AG04449 (cell line): ENCODE measurements at regions of chr6 and their contacts with region 1.

Region 1: DNA sequence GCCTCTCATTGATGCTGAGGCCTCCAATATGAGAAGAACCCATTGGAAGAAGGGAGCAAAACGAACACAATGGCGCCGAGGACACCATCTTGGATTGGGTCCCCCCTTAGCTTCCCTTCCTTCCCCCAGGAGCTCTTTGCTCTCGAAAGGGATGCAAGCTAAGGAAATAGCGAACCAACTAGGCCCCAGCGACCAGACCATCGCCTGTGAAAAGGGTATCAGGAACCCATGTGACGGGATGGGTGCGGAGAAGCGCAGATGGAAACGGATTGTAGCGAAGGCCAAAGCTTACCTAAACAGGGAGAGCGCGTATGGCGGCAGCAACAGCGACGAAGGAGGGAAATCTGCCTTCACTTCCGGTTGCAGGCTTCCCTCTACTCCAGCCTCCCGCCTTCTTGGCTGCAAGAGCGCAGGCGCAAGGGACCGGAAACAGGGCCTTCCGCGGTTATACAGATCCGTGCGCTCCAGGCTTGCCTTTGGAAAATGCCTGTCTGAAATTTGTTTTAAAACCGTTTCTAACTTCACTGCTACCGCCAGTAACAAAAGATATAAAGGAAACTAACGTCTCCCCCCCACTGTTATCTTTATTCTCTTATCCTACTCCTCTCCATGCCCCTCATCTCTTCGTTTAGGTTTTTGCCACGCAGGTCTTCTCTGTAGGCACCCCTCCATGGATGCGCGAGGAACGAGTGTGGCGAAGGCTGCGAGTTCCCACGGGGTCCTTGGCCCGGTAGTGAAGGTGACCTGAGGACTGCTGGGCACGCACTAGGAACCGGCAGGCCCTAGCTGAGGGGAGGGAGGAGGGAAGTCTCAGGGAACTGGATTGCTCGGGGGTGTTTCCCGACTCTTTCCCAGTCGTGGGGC is at the start of gene DDX39B:
- DNase-seq: peak; percentile 85
- H3K4me3 ChIP-seq: peak within 1 kb of the TSS; percentile 97
- CTCF ChIP-seq: no peak

Region 2: GRCh38 chr6:31493875-31494694 is 47.8 kb before region 1 on chr6:
- CTCF ChIA-PET with region 1: interaction called, 15 read pairs
- POLR2A ChIA-PET with region 1: interaction called, 13 read pairs
- DNase-seq: no peak
- H3K4me3 ChIP-seq: peak overlapping the region; percentile 70
- CTCF ChIP-seq: peak; percentile 86

Region 3: GRCh38 chr6:31529329-31530150 is 12.3 kb before region 1 on chr6:
- CTCF ChIA-PET with region 1: interaction called, 4 read pairs
- POLR2A ChIA-PET with region 1: interaction called, 13 read pairs
- DNase-seq: no peak
- H3K4me3 ChIP-seq: no peak overlapping the region
- CTCF ChIP-seq: no peak

Region 4: GRCh38 chr6:31580807-31581433 is 39.0 kb after region 1 on chr6:
- CTCF ChIA-PET with region 1: interaction called, 1,569 read pairs
- POLR2A ChIA-PET with region 1: interaction called, 5 read pairs
- DNase-seq: no peak
- H3K4me3 ChIP-seq: peak overlapping the region; percentile 89
- CTCF ChIP-seq: peak; percentile 93

Region 5: DNA sequence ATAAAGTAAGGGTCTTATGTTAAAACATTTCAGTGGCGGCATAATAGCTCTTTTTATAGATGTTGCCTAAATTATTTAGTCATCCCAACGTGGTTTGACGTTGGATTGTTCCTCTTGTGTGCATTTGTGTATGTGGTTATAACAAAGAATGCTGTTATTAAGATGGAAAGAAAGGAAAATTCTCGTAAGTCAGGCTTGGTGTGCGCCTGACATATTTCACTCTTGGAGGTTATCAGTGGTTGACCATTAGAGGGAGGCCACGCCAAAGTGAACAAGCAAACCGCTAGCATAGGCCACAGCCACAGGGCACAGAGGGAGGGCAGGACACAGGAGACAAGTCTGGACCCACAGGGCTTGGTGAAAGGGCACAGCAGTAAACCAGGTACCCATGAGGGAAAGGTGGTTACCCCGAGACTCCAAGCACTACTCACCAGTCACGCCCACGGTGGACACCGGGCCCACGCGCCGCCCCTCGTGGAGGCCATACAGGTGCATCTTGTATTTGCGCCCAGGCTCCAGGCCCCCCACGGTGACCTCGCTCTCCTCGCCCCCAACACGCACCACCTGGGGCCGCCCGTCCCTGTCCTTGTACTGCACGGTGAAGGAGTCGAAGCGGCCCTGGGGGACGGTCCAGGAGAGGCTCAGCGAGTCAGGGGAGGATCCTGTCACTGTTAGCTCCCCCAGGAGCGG is 519.2 kb after region 1 on chr6:
- CTCF ChIA-PET with region 1: no interaction called
- POLR2A ChIA-PET with region 1: no interaction called
- DNase-seq: no peak
- H3K4me3 ChIP-seq: no peak overlapping the region
- CTCF ChIP-seq: no peak